Endothelial cell of umbilical vein (primary cell): ENCODE measurements at regions of chr5 and their contacts with region 1.

Region 1: GRCh38 chr5:43676083-43676840 is 73.3 kb downstream of the NNT start:
- DNase-seq: no peak
- H3K4me3 ChIP-seq: no peak overlapping the region
- H3K27ac ChIP-seq: no peak overlapping the region
- H3K4me1 ChIP-seq: peaks cover 8% of the 10 kb centered on the region
- H3K27me3 ChIP-seq: no peaks in the 10 kb centered on the region
- CTCF ChIP-seq: no peak
- POLR2A ChIP-seq: no peak

Region 2: DNA sequence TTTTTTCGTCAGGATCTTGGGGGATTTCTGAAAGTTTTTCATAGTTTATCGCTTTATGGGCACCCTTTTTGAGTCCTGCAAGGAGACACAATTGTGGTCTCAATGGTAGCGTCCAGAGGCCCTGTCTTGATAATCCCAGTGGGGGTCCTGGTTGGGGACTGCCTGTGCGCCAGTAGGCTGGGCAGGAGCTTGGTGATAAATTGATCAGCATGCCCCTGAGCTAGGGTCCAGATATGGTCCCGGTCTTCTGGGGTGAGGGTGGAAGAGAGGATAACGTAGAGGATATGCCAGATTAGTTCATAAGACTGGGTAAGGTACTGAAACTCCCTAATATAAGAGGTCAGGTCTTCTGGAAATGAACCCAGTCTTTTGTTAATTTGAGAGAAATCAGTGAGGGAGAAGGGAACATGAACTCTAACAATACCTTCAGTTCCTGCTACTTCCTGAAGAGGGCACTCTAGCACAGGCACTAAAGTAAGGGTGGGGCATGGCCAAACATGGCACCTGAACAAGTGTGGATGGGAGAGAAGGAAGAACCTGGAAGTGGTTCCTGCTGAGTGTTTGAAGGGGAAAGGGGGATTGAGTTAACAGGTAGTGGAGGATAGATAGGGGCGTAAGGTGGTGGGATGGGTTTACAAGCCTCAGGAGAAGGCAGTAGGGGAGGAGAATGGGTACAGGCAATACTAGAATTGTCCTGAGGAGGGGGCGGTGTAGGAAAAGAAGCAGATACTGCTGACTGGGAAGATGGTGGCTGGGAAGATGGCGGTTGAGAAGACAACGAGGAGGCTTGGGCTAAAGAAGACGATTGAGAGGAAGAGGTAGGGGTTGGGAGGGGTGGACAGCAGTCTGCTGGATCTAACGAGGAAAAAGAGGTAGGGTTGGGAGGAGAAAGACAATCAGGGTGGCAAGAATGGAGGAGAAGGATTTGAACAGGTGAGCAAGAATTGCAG is 602.4 kb before region 1 on chr5:
- CTCF ChIA-PET with region 1: no interaction called
- POLR2A ChIA-PET with region 1: no interaction called
- dilution Hi-C with region 1: no loop called
- intact Hi-C with region 1: loop called (anchors 10 kb)
- DNase-seq: peak; percentile 34
- H3K4me3 ChIP-seq: no peak overlapping the region
- H3K27ac ChIP-seq: no peak overlapping the region
- H3K4me1 ChIP-seq: peaks cover 13% of the 10 kb centered on the region
- H3K27me3 ChIP-seq: no peaks in the 10 kb centered on the region
- CTCF ChIP-seq: peak; percentile 46 to 54
- POLR2A ChIP-seq: no peak